Natural killer cell (primary cell): ENCODE measurements at regions of chr3 and their contacts with region 1.

Region 1: DNA sequence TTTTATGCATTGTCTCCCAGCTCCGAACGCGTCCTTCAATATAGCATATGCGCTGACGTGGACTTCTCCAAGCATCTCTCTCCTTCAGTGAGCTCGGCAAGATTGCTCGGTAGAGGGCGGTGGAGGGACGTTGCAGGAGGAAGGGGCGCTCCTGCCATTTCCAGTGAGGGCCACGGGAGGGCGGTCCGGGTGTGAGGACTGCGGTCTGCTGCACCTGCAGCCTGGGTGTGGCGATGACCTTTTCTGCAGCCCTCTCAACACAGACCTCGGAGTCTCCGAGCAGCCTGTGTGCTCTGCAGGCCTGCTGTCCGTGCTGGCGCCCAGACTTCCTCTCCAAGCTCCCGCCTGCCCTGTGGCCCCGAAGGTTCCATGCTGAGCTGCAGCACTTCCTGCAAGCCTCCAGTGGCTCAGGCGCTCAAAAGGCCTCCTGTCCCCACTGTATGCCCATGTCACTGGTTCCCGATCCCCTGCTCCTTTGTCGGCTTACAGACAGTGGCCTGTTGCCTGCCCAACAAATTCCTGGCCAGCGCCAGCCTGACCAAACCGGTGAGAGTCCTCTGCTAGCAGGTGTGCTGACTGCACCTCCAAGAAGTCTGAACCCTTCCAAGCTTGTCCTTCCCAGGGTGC is 8.9 kb upstream of the RTP3 start:
- DNase-seq: peak; percentile 81 to 95
- ATAC-seq: peak; percentile 98 to 100 (median 100)
- H3K4me3 ChIP-seq: peak overlapping the region; percentile 2
- H3K4me3 Mint-ChIP-seq: peak overlapping the region; percentile 17
- H3K27ac ChIP-seq: no peak overlapping the region
- H3K27ac Mint-ChIP-seq: no peak overlapping the region
- H3K4me1 ChIP-seq: peaks cover 13% of the 10 kb centered on the region
- H3K4me1 Mint-ChIP-seq: peaks cover 8 to 10% of the 10 kb centered on the region in 2 donors
- H3K27me3 ChIP-seq: no peaks in the 10 kb centered on the region
- H3K27me3 Mint-ChIP-seq: peaks cover 0 to 5% of the 10 kb centered on the region in 2 donors
- CTCF ChIP-seq: peak; percentile 99

Region 2: DNA sequence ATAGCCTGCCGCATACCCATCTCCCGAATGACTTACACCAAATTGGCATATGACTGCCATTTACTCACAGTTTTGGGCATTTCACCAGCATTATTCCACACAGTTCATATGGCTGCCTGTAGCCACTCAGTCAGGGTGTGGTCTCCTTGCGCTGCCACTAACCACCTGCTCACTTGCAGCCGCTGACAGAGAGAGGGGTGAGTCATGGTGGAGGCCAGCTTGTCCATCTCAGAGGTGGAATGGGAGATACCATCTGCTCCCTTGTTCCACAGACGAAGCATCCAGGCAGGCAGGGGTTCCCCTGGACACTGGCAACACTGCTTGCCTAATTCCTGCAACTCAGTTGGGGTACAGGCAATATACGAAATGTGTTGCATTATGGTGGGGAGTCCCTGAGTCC is 66.2 kb before region 1 on chr3:
- intact Hi-C with region 1: no loop called
- DNase-seq: no peak
- ATAC-seq: no peak
- H3K4me3 ChIP-seq: no peak overlapping the region
- H3K4me3 Mint-ChIP-seq: no peak overlapping the region
- H3K27ac ChIP-seq: no peak overlapping the region
- H3K27ac Mint-ChIP-seq: no peak overlapping the region
- H3K4me1 ChIP-seq: no peaks in the 10 kb centered on the region
- H3K4me1 Mint-ChIP-seq: no peaks in the 10 kb centered on the region
- H3K27me3 ChIP-seq: no peaks in the 10 kb centered on the region
- H3K27me3 Mint-ChIP-seq: no peaks in the 10 kb centered on the region
- CTCF ChIP-seq: no peak

Region 3: GRCh38 chr3:46462111-46462510 is 26.7 kb before region 1 on chr3:
- intact Hi-C with region 1: no loop called
- DNase-seq: no peak
- ATAC-seq: no peak
- H3K4me3 ChIP-seq: no peak overlapping the region
- H3K4me3 Mint-ChIP-seq: no peak overlapping the region
- H3K27ac ChIP-seq: no peak overlapping the region
- H3K27ac Mint-ChIP-seq: no peak overlapping the region
- H3K4me1 ChIP-seq: no peaks in the 10 kb centered on the region
- H3K4me1 Mint-ChIP-seq: no peaks in the 10 kb centered on the region
- H3K27me3 ChIP-seq: peaks cover 15% of the 10 kb centered on the region
- H3K27me3 Mint-ChIP-seq: peaks cover 55 to 60% of the 10 kb centered on the region in 2 donors
- CTCF ChIP-seq: no peak

Region 4: GRCh38 chr3:46538803-46539442 is 50.1 kb after region 1 on chr3:
- intact Hi-C with region 1: loop called (anchors 2 kb)
- DNase-seq: peak; percentile 63 to 93
- ATAC-seq: peak; percentile 84 to 94 (median 92)
- H3K4me3 ChIP-seq: peak overlapping the region; percentile 8
- H3K4me3 Mint-ChIP-seq: peak overlapping the region; percentile 93
- H3K27ac ChIP-seq: peak overlapping the region; percentile 78
- H3K27ac Mint-ChIP-seq: peak overlapping the region; percentile 90 to 94
- H3K4me1 ChIP-seq: peaks cover 23% of the 10 kb centered on the region
- H3K4me1 Mint-ChIP-seq: peaks cover 21 to 24% of the 10 kb centered on the region in 2 donors
- H3K27me3 ChIP-seq: peaks cover 3% of the 10 kb centered on the region
- H3K27me3 Mint-ChIP-seq: peaks cover 23 to 26% of the 10 kb centered on the region in 2 donors
- CTCF ChIP-seq: no peak

Region 5: GRCh38 chr3:46558184-46559043 is 69.6 kb after region 1 on chr3:
- intact Hi-C with region 1: loop called (anchors 1 kb)
- DNase-seq: peak; percentile 35 to 90
- ATAC-seq: peak; percentile 89 to 98 (median 94)
- H3K4me3 ChIP-seq: peak overlapping the region; percentile 16
- H3K4me3 Mint-ChIP-seq: peak overlapping the region; percentile 72
- H3K27ac ChIP-seq: no peak overlapping the region
- H3K27ac Mint-ChIP-seq: no peak overlapping the region
- H3K4me1 ChIP-seq: peaks cover 10% of the 10 kb centered on the region
- H3K4me1 Mint-ChIP-seq: peaks cover 7 to 9% of the 10 kb centered on the region in 2 donors
- H3K27me3 ChIP-seq: no peaks in the 10 kb centered on the region
- H3K27me3 Mint-ChIP-seq: peaks cover 34 to 55% of the 10 kb centered on the region in 2 donors
- CTCF ChIP-seq: peak; percentile 47

Region 6: GRCh38 chr3:46629551-46630517 is 141.0 kb after region 1 on chr3:
- intact Hi-C with region 1: loop called (anchors 1 kb)
- DNase-seq: peak; percentile 72 to 89
- ATAC-seq: peak; percentile 93 to 100 (median 100)
- H3K4me3 ChIP-seq: peak overlapping the region; percentile 9
- H3K4me3 Mint-ChIP-seq: peak overlapping the region; percentile 66
- H3K27ac ChIP-seq: no peak overlapping the region
- H3K27ac Mint-ChIP-seq: peak overlapping the region in 1 of 2 donors; percentile 71
- H3K4me1 ChIP-seq: peaks cover 12% of the 10 kb centered on the region
- H3K4me1 Mint-ChIP-seq: peaks cover 5 to 12% of the 10 kb centered on the region in 2 donors
- H3K27me3 ChIP-seq: no peaks in the 10 kb centered on the region
- H3K27me3 Mint-ChIP-seq: peaks cover 0 to 6% of the 10 kb centered on the region in 2 donors
- CTCF ChIP-seq: peak; percentile 99